Spleen (tissue), 13 donors: ENCODE measurements at regions of chr6 and their contacts with region 1.

Region 1: DNA sequence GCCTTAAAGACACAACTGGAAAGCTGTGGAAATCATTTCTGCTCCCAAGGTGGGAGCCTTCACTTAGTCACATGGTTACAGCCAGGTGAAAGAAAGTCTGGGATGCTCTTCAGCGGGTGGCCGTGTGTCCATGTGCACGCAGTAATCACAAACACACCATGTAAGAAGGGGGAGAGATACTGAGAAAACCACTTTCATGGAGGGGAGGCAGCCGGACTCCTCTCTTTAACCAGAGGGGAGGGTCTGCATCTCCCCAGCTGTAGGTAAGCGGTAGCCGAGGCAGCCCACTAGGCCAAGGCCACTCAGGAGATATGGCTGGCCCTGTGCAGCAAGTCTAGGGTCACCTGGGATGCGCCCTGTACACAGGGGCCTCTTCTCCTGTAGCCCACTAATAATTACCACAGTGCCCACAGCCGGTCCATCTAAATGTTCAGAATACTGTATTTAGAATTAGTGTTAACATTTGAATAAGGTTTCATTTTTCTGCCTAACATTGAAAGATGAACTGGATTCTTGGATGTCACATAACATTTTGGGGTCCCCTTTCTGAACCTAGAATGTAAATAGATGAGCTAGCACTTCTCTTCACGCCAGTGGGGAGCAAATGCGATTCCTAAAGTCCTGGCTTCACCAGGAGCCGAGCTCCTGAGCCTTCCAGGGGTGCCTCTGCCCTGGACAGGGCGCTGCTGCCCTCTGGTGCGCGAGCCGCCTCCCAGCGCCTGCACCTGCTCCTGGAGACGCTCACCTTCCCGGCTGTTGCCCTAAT is 15.9 kb downstream of the GPR31 start:
- DNase-seq: peak; percentile 90
- H3K4me3 ChIP-seq: no peak overlapping the region
- H3K27ac ChIP-seq: peak overlapping the region in 4 of 8 donors; percentile 24 to 70 (median 33)
- H3K4me1 ChIP-seq: peaks cover 0 to 55% (median 20%) of the 10 kb centered on the region in 6 donors
- H3K27me3 ChIP-seq: peaks cover 0 to 23% (median 0%) of the 10 kb centered on the region in 7 donors
- CTCF ChIP-seq: peak; percentile 53 to 84 (median 77)
- POLR2A ChIP-seq: no peak

Region 2: DNA sequence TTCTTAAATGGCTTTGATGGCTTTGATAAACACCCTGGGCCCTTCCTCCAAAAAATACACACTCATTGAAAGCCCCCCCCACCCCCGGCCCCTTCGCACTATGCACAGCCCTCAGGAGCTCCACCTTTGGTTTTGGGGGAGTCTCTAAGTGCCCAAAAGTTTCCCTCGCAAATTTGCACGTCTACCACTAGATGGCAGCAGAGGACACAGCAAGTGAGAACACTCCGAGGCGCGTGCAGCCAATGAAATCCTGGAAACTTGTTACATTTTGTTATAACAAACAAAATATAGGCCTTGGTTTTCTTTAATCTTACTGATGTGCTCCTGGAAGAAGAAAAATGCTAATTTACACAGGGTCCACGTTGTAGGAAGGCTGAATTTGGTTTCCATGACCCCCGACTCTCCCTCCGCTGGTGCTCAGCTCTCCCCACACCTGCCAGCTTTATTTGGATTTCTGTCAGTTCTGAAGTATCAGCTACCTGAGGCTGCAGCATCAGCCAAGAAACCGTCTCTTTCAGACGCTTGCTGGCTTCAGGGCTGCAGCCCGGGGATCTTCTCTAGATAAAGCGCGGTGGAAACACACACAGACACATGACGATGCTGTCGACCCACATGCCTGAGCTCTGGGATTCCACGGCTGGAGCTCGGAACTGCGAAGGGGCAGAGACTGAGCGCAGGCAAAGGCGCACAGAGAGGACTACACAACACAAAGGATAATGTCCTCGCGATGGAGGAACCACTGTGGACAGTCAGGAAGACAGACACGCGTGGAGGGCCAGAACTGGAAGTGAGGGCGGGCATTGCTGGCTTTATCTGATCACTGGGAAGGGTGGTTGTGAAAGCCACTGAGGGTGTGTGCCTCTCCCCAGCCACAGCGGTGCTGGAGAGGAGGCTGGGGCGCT is 366.4 kb before region 1 on chr6:
- intact Hi-C with region 1: loop called (anchors 5 kb)
- DNase-seq: no peak
- H3K4me3 ChIP-seq: no peak overlapping the region
- H3K27ac ChIP-seq: no peak overlapping the region
- H3K4me1 ChIP-seq: peaks cover 0 to 11% (median 5%) of the 10 kb centered on the region in 6 donors
- H3K27me3 ChIP-seq: peaks cover 0 to 7% (median 0%) of the 10 kb centered on the region in 7 donors
- CTCF ChIP-seq: peak; percentile 49 to 87 (median 71)
- POLR2A ChIP-seq: no peak

Region 3: DNA sequence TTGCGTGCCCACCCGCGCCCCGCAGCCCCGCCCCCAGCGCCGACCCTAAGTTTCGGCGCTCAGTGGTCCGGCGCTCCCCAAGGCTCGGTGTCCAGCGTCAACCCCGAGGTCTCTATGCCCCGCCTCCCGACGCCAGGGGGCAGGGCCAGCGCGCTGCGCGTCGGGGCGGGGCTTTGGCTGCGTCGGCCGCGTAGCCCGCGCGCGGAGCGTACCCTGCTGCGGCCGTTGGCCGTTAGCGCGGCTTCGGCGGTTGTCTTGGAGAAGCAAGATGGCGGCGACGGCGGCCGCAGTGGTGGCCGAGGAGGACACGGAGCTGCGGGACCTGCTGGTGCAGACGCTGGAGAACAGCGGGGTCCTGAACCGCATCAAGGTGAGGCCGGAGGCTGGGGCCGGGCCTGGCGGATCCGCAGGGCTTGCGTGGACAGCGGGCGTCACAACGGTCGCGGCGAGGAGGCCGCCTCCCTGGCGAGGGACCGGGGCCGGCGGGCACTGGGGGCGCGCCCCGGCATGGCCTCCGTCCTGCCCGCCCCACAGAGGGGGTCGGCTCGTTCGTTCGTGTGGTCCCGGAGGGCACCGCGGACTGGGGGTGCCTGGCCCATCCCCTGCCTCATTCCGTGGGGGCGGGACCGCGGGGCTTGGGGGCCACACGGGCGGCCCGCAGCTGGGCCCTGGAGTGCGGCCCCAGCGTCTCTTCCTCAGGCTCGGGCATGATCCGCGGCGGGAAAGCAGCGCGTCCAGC is 142.5 kb before region 1 on chr6 and contains the start of gene CEP43:
- intact Hi-C with region 1: loop called (anchors 5 kb)
- DNase-seq: peak; percentile 99
- H3K4me3 ChIP-seq: peak within 1 kb of the TSS; percentile 80 to 100 (median 96)
- H3K27ac ChIP-seq: peak within 1 kb of the TSS; percentile 73 to 91 (median 84)
- H3K4me1 ChIP-seq: peaks cover 15 to 54% (median 30%) of the 10 kb centered on the region in 6 donors
- H3K27me3 ChIP-seq: no peaks in the 10 kb centered on the region
- CTCF ChIP-seq: peak in 9 of 11 experiments; percentile 15 to 67 (median 47)
- POLR2A ChIP-seq: no peak
- total RNA-seq, gene CEP43: 13.1 to 21.8 (median 17.7) TPM